PC-9 (cell line): ENCODE measurements at regions of chr10 and their contacts with region 1.

Region 1: DNA sequence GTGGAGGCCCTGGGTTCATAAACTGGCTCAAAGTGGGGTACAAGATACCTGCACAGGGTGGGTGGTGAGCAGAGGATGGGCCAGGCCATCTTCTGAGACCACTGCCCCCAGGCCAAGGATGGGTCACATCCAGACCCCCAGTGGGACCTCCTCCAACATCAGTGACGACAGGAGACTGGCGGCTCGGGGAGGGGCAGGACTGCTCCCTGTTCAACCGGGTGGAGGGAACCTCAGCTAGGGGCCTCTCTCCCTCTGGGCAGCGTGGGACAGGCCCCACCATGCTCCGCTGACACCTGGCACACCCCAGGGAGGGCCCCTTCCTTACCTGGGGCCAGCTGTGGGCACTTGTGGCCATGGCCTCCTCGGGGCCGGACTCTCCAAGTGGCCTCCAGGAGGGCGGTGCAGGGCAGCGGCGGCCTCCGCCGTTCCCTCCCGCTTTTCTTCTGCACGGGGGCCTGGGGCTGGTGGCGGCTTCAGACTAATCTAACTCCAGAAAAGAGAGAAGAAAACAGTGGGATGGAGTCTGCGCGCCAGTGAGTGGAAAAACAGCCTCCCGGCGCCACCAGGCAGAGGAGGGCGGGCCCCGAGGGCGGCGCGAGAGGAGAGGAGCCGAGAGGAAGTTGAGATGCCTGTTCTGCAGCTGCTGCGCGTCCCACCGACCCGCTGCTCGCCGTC is at the start of gene CALHM2:
- DNase-seq: peak; percentile 46 to 70
- H3K4me3 ChIP-seq: peak within 1 kb of the TSS; percentile 83
- H3K27ac ChIP-seq: peak within 1 kb of the TSS; percentile 67
- H3K4me1 ChIP-seq: peaks cover 46% of the 10 kb centered on the region
- H3K27me3 ChIP-seq: no peaks in the 10 kb centered on the region
- CTCF ChIP-seq: no peak
- total RNA-seq, gene CALHM2: 46.3 and 54.1 TPM in 2 replicates

Region 2: GRCh38 chr10:103463499-103463898 is 11.5 kb after region 1 on chr10:
- CTCF ChIA-PET with region 1: no interaction called
- POLR2A ChIA-PET with region 1: interaction called, 24 read pairs
- intact Hi-C with region 1: no loop called
- DNase-seq: peak in 1 of 2 experiments; percentile 63
- H3K4me3 ChIP-seq: no peak overlapping the region
- H3K27ac ChIP-seq: no peak overlapping the region
- H3K4me1 ChIP-seq: 0 out of 2 replicates have a peak, but pooled peaks cover 5% of the 10 kb centered on the region
- H3K27me3 ChIP-seq: no peaks in the 10 kb centered on the region
- CTCF ChIP-seq: no peak

Region 3: DNA sequence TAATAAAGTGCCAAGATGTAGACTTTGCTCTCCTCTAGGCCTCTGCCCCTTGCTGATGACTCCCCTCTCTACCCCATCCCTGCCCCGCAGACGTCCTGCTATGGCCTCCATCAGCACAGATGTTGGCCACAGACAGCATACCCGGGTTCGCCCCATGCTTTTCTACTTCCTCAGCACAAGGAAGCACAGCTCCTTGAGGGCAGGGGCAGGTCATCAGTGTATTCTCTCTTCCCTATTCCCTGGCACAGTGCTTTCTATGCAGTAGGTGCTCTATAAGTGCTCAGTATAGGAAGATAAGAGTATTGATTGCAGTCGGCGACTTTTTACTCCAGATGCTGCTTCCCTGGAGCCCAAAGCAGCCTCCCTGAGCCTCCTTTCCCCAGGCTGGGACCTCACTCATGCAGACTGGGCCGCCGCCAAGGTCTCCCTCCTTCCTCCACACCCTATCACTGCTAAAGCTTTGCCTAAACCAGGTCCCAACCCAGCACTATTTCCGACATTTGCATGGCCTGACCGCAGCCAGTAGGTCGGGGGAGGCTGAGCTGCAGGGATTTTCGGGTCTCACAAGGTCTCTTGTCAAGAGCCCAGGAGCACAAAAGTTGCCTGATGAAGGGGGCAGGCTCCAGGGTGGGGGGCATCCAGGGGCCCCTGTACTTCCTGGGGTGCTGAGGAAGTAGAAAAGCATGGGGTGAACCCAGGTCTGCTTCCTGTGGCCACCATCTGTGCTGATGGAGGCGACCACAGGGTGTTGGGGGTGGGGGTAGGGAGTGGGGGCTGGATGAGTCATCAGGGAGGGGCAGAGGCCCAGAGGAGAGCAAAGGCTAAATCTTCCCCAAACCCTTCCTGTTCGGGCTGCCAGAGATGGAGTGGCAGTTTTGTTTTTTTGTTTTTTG is 19.0 kb after region 1 on chr10:
- CTCF ChIA-PET with region 1: no interaction called
- POLR2A ChIA-PET with region 1: no interaction called
- intact Hi-C with region 1: loop called (anchors 1 kb)
- DNase-seq: peak; percentile 63 to 67
- H3K4me3 ChIP-seq: peak overlapping the region; percentile 43
- H3K27ac ChIP-seq: peak overlapping the region; percentile 94
- H3K4me1 ChIP-seq: peaks cover 29% of the 10 kb centered on the region
- H3K27me3 ChIP-seq: no peaks in the 10 kb centered on the region
- CTCF ChIP-seq: no peak

Region 4: GRCh38 chr10:103476046-103476995 is 24.4 kb after region 1 on chr10:
- CTCF ChIA-PET with region 1: interaction called, 3 read pairs
- POLR2A ChIA-PET with region 1: interaction called, 3 read pairs
- intact Hi-C with region 1: loop called (anchors 1 kb)
- DNase-seq: peak in 1 of 2 experiments; percentile 18
- H3K4me3 ChIP-seq: no peak overlapping the region
- H3K27ac ChIP-seq: no peak overlapping the region
- H3K4me1 ChIP-seq: peaks cover 57% of the 10 kb centered on the region
- H3K27me3 ChIP-seq: no peaks in the 10 kb centered on the region
- CTCF ChIP-seq: no peak; the same call in 1 of the 2 replicates